Colonic mucosa (tissue), 4 donors: ENCODE measurements at regions of chr1 and their contacts with region 1.

Region 1: GRCh38 chr1:191993549-191993948 is 164.7 kb upstream of the RGS18 start:
- DNase-seq: no peak
- H3K4me3 ChIP-seq: no peak overlapping the region
- H3K27ac ChIP-seq: no peak overlapping the region
- H3K4me1 ChIP-seq: no peaks in the 10 kb centered on the region
- H3K27me3 ChIP-seq: no peaks in the 10 kb centered on the region
- CTCF ChIP-seq: no peak

Region 2: DNA sequence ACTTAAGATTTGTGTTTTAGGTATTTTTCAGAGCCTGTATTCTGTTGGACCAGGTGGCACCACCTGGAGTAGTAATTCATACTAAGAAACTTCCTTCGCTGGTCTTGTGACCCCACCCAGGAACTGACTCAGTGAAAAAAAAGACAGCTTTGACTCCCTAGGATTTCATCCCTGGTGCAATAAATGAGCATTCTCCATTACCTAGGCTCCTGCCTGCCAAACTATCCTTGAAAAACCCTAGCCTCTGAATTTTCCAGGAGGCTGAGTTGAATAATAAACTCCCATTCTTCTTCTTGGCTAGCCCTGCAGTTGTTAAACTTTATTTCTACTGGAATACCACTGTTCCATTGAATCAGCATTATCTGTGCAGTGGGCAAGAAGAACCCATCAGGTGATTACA is 154.1 kb after region 1 on chr1:
- intact Hi-C with region 1: no loop called
- DNase-seq: no peak
- H3K4me3 ChIP-seq: no peak overlapping the region
- H3K27ac ChIP-seq: no peak overlapping the region
- H3K4me1 ChIP-seq: no peaks in the 10 kb centered on the region
- H3K27me3 ChIP-seq: no peaks in the 10 kb centered on the region
- CTCF ChIP-seq: no peak

Region 3: DNA sequence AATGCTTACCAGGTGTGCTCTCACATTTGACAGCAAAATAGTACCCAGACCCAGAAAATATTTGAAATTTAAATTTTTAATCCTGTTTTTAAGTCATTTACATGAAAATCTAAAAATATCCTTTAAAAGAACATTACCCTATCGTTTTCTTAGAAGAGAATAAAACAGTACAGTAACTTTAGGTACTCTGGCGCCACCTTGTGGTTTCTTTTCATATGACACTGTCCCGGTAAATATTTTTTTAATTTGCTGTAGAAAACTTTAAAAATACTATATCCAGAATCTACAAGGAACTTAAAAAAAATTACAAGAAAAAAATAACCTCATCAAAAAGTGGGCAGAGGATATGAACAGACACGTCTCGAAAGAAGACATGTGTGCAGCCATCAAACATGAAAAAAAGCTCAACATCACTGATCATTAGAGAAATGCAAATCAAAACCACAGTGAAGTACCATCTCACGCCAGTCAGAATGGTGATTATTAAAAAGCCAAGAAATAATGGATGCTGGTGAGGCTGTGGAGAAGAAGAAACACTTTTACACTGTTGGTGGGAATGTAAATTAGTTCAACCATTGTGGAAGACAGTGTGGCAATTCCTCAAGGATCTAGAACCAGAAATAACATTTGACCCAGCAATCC is 452.4 kb after region 1 on chr1:
- intact Hi-C with region 1: loop called (anchors 10 kb)
- DNase-seq: peak; percentile 59
- H3K4me3 ChIP-seq: no peak overlapping the region
- H3K27ac ChIP-seq: no peak overlapping the region
- H3K4me1 ChIP-seq: no peaks in the 10 kb centered on the region
- H3K27me3 ChIP-seq: no peaks in the 10 kb centered on the region
- CTCF ChIP-seq: peak; percentile 72